Left cardiac atrium (tissue), 4 donors: ENCODE measurements at regions of chr22 and their contacts with region 1.

Region 1: GRCh38 chr22:36331306-36331911 is 56.4 kb downstream of the MYH9 start:
- DNase-seq: peak; percentile 88
- ATAC-seq: peak; percentile 45 to 67

Region 2: GRCh38 chr22:35938226-35938625 is 393.2 kb before region 1 on chr22:
- intact Hi-C with region 1: no loop called
- DNase-seq: no peak
- ATAC-seq: no peak

Region 3: DNA sequence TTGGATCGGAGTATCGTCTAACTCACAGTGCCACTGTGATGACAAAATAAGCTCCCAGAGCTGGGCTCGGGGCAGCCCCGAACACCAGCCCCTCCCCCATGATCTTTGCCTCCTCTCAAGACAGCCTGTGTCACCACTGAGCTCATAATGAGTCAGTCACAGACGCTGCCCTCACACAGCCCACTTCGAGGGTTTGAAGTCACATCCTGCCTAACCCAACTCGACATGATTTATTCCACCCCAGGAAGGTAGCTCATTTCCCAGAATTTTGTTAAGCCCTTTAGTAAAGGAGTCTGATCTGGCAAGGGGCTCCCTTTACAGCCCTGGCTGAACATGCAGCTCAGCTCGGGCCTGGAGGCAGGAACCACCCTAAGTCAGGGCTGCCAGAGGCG is 33.6 kb after region 1 on chr22:
- intact Hi-C with region 1: loop called (anchors 2 to 5 kb)
- DNase-seq: peak; percentile 85
- ATAC-seq: peak; percentile 42 to 67

Region 4: DNA sequence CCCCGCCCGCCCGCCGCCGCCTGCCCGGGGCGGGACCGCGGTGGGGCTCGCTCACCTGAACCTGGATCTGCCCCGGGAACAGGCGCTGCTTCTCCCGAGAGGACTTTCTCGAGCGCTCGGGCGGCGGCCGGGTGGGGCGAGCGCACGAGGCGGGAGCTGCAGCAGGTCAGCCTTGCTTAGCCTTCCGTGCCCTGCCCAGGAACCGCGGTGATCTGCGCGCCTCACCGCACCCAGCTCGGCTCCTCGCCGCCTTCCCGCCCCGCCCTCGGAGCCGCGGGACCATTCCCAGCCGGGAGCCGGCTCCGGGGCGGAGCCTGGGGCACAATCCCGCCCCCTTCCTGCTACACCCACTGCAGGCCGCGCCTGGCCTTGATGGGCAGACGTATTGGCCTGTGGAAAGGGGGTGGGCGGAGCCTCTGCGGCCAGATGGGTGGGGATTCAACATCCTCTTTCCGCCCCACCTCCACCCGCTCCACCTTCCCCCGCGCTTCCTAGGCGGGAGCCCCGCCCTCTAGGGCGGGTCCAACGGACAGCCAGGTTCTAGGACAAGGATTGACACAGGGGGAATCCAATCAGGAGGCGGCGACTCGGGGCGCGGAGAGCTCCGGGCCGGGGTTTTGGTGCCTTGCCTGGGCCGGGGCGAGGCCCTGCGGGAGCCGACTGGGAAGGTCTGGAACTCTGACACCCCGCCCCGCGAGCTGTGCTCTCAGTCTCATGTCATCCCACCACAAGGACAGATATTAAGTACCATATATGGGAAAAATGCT is 56.5 kb after region 1 on chr22 and contains the start of gene MYH9:
- intact Hi-C with region 1: loop called (anchors 5 kb)
- DNase-seq: peak; percentile 100
- ATAC-seq: peak; percentile 94
- total RNA-seq, gene MYH9: 225 to 367 TPM

Region 5: DNA sequence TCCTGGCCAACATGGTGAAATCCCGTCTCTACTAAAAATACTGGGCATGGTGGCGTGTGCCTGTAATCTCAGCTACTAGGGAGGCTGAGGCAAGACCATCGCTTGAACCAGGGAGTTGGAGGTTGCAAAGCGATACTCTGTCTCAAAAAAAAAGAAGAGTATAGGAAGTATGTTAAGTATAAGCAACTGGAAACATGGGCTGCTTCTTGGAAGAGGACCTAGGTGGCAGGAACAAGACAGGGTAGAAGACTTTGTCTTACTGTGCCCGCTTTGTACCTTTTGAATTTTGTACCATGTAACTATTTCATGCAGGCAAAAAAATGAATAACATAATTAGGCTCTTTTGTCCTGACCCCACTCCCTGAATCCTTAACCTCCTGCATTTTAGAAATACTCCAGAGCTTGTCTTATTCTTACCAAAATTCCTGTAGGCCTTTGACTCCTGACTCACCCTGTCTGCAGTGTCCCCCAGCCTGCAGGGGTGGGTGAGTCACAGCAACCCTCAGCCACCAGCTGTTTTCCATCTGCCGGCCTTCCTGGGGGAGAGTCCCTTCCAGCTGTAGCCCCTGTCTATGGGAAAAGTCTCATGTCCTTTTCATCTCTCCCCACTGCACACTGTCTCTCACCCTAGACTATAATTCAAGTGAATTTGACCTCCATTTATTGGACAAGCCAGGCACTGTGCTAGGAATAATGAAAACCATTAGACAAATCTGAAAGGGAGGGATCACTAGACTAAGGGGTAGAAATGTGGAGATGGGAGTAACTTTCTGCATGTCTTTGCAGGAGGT is 108.3 kb after region 1 on chr22:
- intact Hi-C with region 1: no loop called
- DNase-seq: peak; percentile 71
- ATAC-seq: peak; percentile 79 to 96